Cardiac septum (tissue), 1 donor: ENCODE measurements at regions of chr6 and their contacts with region 1.

Region 1: GRCh38 chr6:17706580-17707370 is at the start of gene NUP153:
- DNase-seq: peak; percentile 100
- total RNA-seq, gene NUP153: 25.8 TPM

Region 2: GRCh38 chr6:17599885-17600526 is 106.8 kb before region 1 on chr6 and contains the start of gene FAM8A1:
- intact Hi-C with region 1: loop called (anchors 2 kb)
- DNase-seq: peak; percentile 99
- total RNA-seq, gene FAM8A1: 15.1 TPM

Region 3: DNA sequence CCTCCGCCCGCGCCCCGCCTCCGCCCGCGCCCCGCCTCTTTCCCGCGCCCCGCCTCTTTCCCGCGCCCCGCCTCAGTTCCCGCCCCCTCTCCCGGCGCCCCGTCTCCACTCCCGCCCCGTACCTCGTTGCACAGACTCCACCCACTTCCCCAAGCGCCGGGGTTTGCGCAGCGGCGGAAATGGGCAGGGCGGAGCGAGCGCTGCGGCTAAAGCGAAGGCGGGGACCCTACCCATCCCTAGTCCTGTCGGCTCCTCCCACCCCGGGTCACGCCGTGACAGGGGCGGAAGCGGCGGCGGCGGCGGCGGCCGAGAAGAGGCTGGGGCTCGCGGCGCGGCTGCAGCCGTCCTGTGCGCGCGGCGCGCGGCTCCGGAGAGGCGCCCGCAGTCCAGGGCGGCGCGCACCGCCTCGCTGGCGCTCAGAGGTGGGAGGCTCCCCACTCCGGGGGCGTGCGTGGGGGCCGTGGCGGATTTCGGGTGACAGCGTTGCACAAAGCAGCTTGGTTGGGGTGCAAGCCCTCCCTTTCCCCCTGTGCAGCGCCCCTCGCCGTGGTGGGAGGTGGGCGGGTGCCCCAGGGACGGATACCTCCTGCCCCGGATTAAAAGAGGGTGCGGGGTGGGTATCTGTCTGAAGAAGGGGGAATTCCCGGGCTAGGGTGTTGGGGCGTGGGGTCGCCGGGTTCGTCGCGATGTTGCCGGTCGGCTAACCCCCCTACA is 448.5 kb after region 1 on chr6 and contains the start of gene KDM1B:
- intact Hi-C with region 1: loop called (anchors 10 kb)
- DNase-seq: peak; percentile 100
- total RNA-seq, gene KDM1B: 13.8 TPM

Region 4: DNA sequence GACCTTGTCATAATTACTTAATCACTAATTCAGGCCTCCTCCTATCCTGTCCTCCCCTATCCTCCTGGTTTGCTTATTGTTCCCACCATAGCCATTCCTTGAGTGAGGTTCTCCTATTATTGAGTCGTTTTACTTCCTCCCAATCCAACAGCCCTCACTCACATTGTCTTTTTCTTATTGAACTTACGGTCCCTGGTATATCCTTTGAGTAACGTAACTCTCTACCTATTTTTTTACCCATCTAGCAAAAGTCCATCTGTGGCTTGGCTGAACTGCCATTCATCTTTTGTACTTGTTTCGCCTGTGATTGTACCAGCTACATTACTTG is 514.5 kb after region 1 on chr6:
- intact Hi-C with region 1: no loop called
- DNase-seq: no peak